Activated CD4-positive, alpha-beta T cell treated with anti-CD3 and anti-CD28 coated beads for 36 hours (primary cell): ENCODE measurements at regions of chr6 and their contacts with region 1.

Region 1: GRCh38 chr6:136249811-136250685 is at the start of gene MTFR2:
- DNase-seq: peak; percentile 95
- ATAC-seq: peak; percentile 94
- H3K4me3 Mint-ChIP-seq: peak within 1 kb of the TSS; percentile 98
- H3K27ac Mint-ChIP-seq: peak within 1 kb of the TSS; percentile 90
- H3K4me1 Mint-ChIP-seq: peaks cover 42% of the 10 kb centered on the region
- H3K27me3 Mint-ChIP-seq: no peaks in the 10 kb centered on the region
- total RNA-seq, gene MTFR2: 26.9 to 28.9 TPM

Region 2: DNA sequence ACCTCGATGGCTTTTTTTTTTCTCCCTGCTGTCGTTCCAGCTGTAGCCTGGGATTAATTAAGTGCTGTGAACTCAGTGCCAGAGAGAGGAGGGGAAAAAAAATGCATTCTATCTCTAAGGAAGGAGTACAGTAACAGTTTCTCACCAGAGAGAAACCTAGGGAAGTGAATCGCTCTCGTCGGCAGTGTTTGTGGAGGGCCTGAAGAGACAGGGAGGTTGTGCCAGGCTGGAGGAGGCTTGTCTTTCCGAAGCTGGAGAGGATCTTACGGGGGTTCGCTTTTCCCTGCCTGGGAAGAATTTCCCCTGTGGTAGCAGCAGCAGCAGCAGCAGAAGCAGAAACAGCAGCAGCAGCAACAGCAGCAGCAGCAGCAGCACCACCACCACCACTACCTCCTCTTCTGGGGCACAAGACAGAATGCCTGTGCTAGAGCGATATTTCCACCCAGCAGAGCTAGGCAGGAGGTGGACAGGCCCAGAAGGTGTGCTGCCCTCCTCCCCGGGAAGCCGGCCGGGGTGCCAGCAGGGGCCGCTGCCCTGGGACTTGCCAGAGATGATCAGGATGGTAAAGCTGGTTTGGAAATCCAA is 212.1 kb before region 1 on chr6:
- CTCF ChIA-PET with region 1: no interaction called
- POLR2A ChIA-PET with region 1: no interaction called
- intact Hi-C with region 1: no loop called
- DNase-seq: no peak
- ATAC-seq: peak; percentile 27
- H3K4me3 Mint-ChIP-seq: no peak overlapping the region
- H3K27ac Mint-ChIP-seq: peak overlapping the region; percentile 62
- H3K4me1 Mint-ChIP-seq: peaks cover 10% of the 10 kb centered on the region
- H3K27me3 Mint-ChIP-seq: peaks cover 2% of the 10 kb centered on the region

Region 3: DNA sequence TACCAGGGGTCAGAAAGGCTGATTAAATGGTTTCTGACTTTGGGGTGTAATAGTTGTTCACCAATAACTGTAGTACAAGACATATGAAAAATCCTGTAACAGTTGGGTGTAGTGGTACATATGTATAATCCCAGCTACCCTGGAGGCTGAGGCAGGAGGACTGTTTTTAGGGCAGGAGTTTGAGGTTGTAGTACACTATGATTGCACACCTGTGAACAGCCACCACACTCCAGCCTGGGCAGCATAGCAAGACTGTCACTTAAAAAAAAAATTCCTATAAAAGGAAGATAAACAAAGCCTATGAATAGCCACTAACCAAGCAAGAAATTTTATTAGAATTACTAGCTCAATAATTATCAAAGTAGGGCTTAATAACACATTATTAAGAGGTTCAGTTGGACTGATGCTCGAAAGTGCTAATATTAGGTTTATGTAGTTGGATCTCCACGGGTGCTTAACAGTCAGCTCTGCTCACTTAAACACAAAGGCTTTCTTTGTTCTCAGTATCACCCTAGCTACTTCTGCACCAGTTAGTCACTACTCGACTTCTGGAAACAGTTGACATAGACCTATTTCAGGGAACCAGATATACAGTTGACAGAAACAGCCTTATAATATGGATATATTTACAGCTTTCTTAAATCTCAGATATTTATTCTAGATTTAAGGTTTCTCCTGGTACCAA is 112.9 kb before region 1 on chr6:
- CTCF ChIA-PET with region 1: no interaction called
- POLR2A ChIA-PET with region 1: no interaction called
- intact Hi-C with region 1: no loop called
- DNase-seq: no peak
- ATAC-seq: no peak
- H3K4me3 Mint-ChIP-seq: no peak overlapping the region
- H3K27ac Mint-ChIP-seq: no peak overlapping the region
- H3K4me1 Mint-ChIP-seq: no peaks in the 10 kb centered on the region
- H3K27me3 Mint-ChIP-seq: no peaks in the 10 kb centered on the region

Region 4: GRCh38 chr6:136274062-136274461 is 24.0 kb after region 1 on chr6:
- CTCF ChIA-PET with region 1: interaction called, 7 read pairs
- POLR2A ChIA-PET with region 1: interaction called, 5 read pairs
- intact Hi-C with region 1: loop called in 1 of 2 experiments (anchors 2 kb)
- DNase-seq: no peak
- ATAC-seq: no peak
- H3K4me3 Mint-ChIP-seq: no peak overlapping the region
- H3K27ac Mint-ChIP-seq: peak overlapping the region; percentile 3
- H3K4me1 Mint-ChIP-seq: peaks cover 31% of the 10 kb centered on the region
- H3K27me3 Mint-ChIP-seq: no peaks in the 10 kb centered on the region

Region 5: GRCh38 chr6:136289579-136290409 is 39.7 kb after region 1 on chr6 and contains the start of gene BCLAF1:
- CTCF ChIA-PET with region 1: interaction called, 9 read pairs
- POLR2A ChIA-PET with region 1: interaction called, 48 read pairs
- intact Hi-C with region 1: loop called (anchors 1 kb)
- DNase-seq: peak; percentile 100
- ATAC-seq: peak; percentile 83
- H3K4me3 Mint-ChIP-seq: peak within 1 kb of the TSS; percentile 100
- H3K27ac Mint-ChIP-seq: peak within 1 kb of the TSS; percentile 100
- H3K4me1 Mint-ChIP-seq: peaks cover 37% of the 10 kb centered on the region
- H3K27me3 Mint-ChIP-seq: no peaks in the 10 kb centered on the region
- total RNA-seq, gene BCLAF1: 166 to 223 TPM

Region 6: GRCh38 chr6:136989571-136990241 is 739.7 kb after region 1 on chr6:
- CTCF ChIA-PET with region 1: no interaction called
- POLR2A ChIA-PET with region 1: no interaction called
- intact Hi-C with region 1: no loop called
- DNase-seq: peak; percentile 15
- ATAC-seq: no peak
- H3K4me3 Mint-ChIP-seq: no peak overlapping the region
- H3K27ac Mint-ChIP-seq: no peak overlapping the region
- H3K4me1 Mint-ChIP-seq: peaks cover 2% of the 10 kb centered on the region
- H3K27me3 Mint-ChIP-seq: peaks cover 44% of the 10 kb centered on the region